Naive thymus-derived CD4-positive, alpha-beta T cell (primary cell): ENCODE measurements at regions of chr1 and their contacts with region 1.

Region 1: GRCh38 chr1:6489799-6490180 is 1.7 kb downstream of the PLEKHG5 start:
- DNase-seq: peak; percentile 66 to 87 (median 77)
- ATAC-seq: peak; percentile 77
- H3K4me3 ChIP-seq: peak overlapping the region; percentile 80
- H3K4me3 Mint-ChIP-seq: peak overlapping the region; percentile 63 to 87 (median 81)
- H3K27ac ChIP-seq: peak overlapping the region; percentile 71
- H3K27ac Mint-ChIP-seq: peak overlapping the region in 1 of 9 donors; percentile 79
- H3K4me1 ChIP-seq: peaks cover 13 to 18% of the 10 kb centered on the region in 2 donors
- H3K4me1 Mint-ChIP-seq: peaks cover 20 to 37% (median 31%) of the 10 kb centered on the region in 7 donors
- H3K27me3 ChIP-seq: peaks cover 0 to 6% of the 10 kb centered on the region in 2 donors
- H3K27me3 Mint-ChIP-seq: peaks cover 6 to 24% (median 9%) of the 10 kb centered on the region in 5 donors

Region 2: GRCh38 chr1:6157528-6158174 is 332.1 kb before region 1 on chr1:
- CTCF ChIA-PET with region 1: no interaction called
- POLR2A ChIA-PET with region 1: no interaction called
- intact Hi-C with region 1: no loop called
- DNase-seq: peak in 1 of 9 donors; percentile 35
- ATAC-seq: no peak
- H3K4me3 ChIP-seq: no peak overlapping the region
- H3K4me3 Mint-ChIP-seq: no peak overlapping the region
- H3K27ac ChIP-seq: no peak overlapping the region
- H3K27ac Mint-ChIP-seq: peak overlapping the region in 1 of 9 donors; percentile 41
- H3K4me1 ChIP-seq: peaks cover 0 to 5% of the 10 kb centered on the region in 2 donors
- H3K4me1 Mint-ChIP-seq: peaks cover 0 to 24% (median 6%) of the 10 kb centered on the region in 7 donors
- H3K27me3 ChIP-seq: no peaks in the 10 kb centered on the region
- H3K27me3 Mint-ChIP-seq: peaks cover 0 to 21% (median 13%) of the 10 kb centered on the region in 5 donors

Region 3: GRCh38 chr1:6244401-6245049 is 245.3 kb before region 1 on chr1:
- CTCF ChIA-PET with region 1: no interaction called
- POLR2A ChIA-PET with region 1: no interaction called
- intact Hi-C with region 1: no loop called
- DNase-seq: no peak
- ATAC-seq: no peak
- H3K4me3 ChIP-seq: no peak overlapping the region
- H3K4me3 Mint-ChIP-seq: peak overlapping the region in 3 of 10 donors; percentile 29 to 43 (median 39)
- H3K27ac ChIP-seq: no peak overlapping the region
- H3K27ac Mint-ChIP-seq: peak overlapping the region in 1 of 9 donors; percentile 42
- H3K4me1 ChIP-seq: peaks cover 3 to 13% of the 10 kb centered on the region in 2 donors
- H3K4me1 Mint-ChIP-seq: peaks cover 5 to 19% (median 12%) of the 10 kb centered on the region in 7 donors
- H3K27me3 ChIP-seq: peaks cover 20 to 45% of the 10 kb centered on the region in 2 donors
- H3K27me3 Mint-ChIP-seq: peaks cover 42 to 75% (median 45%) of the 10 kb centered on the region in 5 donors

Region 4: DNA sequence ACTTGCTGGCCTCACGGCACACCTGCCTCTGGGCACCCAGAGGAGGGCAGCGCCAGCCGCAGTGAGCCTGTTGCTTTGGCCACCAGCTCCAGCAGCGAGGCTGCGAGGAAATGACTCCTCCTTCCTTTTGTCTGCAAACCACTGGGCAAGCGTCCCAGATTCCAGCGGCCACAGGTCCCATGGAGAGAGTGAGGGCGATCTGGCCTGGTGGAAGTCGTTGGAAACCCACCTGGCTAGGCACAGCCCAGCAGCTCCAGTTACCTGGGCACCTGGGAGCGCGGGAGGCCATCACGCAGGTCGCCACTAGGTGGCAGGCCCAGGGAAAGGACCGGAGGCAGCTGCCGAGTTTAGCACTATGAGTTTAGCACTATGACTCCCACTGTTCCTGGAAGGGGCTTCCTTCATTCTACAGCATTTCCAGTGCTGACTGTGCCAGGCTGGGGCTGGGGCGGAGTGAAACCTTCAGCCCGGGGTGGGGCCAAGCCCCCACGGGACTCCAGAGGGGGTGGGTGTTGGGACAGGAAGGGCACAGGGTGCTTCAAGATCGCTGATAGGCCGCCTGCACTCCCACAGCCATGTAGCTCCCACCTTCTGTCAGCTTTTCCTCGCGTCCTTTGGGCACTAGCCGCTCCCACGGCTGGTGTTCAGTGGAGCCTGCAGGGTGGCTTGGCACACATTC is 66.3 kb before region 1 on chr1:
- CTCF ChIA-PET with region 1: interaction called, 7 read pairs
- POLR2A ChIA-PET with region 1: no interaction called
- intact Hi-C with region 1: loop called (anchors 1 to 2 kb)
- DNase-seq: peak; percentile 45 to 75 (median 66)
- ATAC-seq: peak; percentile 84
- H3K4me3 ChIP-seq: peak overlapping the region; percentile 15
- H3K4me3 Mint-ChIP-seq: peak overlapping the region; percentile 54 to 83 (median 72)
- H3K27ac ChIP-seq: no peak overlapping the region
- H3K27ac Mint-ChIP-seq: no peak overlapping the region
- H3K4me1 ChIP-seq: peaks cover 13 to 31% of the 10 kb centered on the region in 2 donors
- H3K4me1 Mint-ChIP-seq: peaks cover 0 to 14% (median 11%) of the 10 kb centered on the region in 7 donors
- H3K27me3 ChIP-seq: peaks cover 0 to 8% of the 10 kb centered on the region in 2 donors
- H3K27me3 Mint-ChIP-seq: peaks cover 18 to 60% (median 26%) of the 10 kb centered on the region in 5 donors

Region 5: DNA sequence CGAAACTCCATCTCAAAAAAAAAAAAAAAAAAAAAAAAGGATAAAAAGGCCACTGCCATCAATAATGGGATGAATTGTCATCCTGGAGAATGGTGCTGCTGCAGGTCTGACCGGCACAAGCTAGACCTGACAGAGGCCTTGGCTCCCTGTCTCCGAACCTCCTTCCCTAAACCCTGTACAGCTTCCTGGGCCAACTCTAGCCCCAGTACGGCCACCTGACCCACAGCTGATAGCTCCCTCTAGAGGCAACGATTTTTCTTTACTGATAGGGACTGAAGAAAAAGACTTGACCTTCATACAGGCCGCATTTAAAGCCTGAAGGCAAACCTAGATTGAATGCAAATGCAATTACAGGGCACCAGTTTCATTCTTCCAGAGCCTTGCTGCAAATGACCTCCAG is 33.8 kb after region 1 on chr1:
- CTCF ChIA-PET with region 1: no interaction called
- POLR2A ChIA-PET with region 1: interaction called, 5 read pairs
- intact Hi-C with region 1: loop called in 1 of 2 experiments (anchors 1 kb)
- DNase-seq: no peak
- ATAC-seq: no peak
- H3K4me3 ChIP-seq: no peak overlapping the region
- H3K4me3 Mint-ChIP-seq: no peak overlapping the region
- H3K27ac ChIP-seq: no peak overlapping the region
- H3K27ac Mint-ChIP-seq: peak overlapping the region in 6 of 9 donors; percentile 14 to 84 (median 48)
- H3K4me1 ChIP-seq: no peaks in the 10 kb centered on the region
- H3K4me1 Mint-ChIP-seq: peaks cover 0 to 11% (median 5%) of the 10 kb centered on the region in 7 donors
- H3K27me3 ChIP-seq: no peaks in the 10 kb centered on the region
- H3K27me3 Mint-ChIP-seq: no peaks in the 10 kb centered on the region

Region 6: DNA sequence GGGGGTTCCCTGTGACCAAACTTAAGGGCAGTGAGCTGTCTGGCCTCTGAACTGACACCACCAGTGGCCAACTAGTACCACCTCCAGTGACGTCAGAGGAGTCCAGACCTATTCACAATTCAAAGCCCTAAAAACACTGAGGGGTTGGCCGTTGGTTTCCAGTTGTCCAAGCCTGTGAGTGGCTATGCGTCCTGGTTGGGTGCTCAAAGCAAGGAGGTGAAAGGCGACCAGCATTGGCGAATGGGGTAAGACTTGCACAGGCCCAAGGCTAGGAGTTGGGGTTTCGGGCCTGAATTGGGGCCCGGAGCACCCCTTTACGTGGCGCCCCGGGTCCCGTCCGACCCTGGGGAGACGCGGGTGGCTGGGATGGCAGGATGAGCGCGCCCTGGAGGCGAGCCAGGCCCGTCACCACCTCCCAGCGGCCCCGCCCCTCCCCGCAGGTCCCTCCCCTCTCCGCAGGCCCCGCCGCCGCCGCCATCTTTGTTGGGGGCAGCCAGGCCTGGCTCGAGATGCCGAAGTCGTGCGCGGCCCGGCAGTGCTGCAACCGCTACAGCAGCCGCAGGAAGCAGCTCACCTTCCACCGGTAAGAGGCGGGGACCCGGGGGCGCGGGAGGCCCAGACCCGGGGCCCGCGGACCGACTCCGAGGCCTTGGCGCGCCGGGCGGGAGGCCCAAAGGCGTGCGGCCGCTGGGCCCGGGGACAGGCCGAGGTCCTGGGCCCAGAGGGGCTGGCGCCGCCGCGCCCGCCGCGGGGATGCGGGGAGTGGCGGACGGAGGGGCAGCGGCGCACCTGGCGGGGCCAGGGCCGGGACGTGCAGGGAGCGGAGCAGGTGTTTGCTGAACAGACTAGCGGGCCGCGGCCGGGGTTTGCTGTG is 135.2 kb after region 1 on chr1 and contains the start of gene THAP3:
- CTCF ChIA-PET with region 1: interaction called, 3 read pairs
- POLR2A ChIA-PET with region 1: no interaction called
- intact Hi-C with region 1: loop called in 1 of 2 experiments (anchors 5 kb)
- DNase-seq: peak; percentile 77 to 90 (median 87)
- ATAC-seq: peak; percentile 99
- H3K4me3 ChIP-seq: peak within 1 kb of the TSS; percentile 52
- H3K4me3 Mint-ChIP-seq: peak within 1 kb of the TSS; percentile 86 to 97 (median 92)
- H3K27ac ChIP-seq: peak within 1 kb of the TSS; percentile 78
- H3K27ac Mint-ChIP-seq: peak within 1 kb of the TSS; percentile 72 to 96 (median 86)
- H3K4me1 ChIP-seq: peaks cover 13 to 18% of the 10 kb centered on the region in 2 donors
- H3K4me1 Mint-ChIP-seq: peaks cover 11 to 39% (median 30%) of the 10 kb centered on the region in 7 donors
- H3K27me3 ChIP-seq: no peaks in the 10 kb centered on the region
- H3K27me3 Mint-ChIP-seq: no peaks in the 10 kb centered on the region
- total RNA-seq, gene THAP3: 14.1 to 30.5 (median 20.3) TPM

Region 7: DNA sequence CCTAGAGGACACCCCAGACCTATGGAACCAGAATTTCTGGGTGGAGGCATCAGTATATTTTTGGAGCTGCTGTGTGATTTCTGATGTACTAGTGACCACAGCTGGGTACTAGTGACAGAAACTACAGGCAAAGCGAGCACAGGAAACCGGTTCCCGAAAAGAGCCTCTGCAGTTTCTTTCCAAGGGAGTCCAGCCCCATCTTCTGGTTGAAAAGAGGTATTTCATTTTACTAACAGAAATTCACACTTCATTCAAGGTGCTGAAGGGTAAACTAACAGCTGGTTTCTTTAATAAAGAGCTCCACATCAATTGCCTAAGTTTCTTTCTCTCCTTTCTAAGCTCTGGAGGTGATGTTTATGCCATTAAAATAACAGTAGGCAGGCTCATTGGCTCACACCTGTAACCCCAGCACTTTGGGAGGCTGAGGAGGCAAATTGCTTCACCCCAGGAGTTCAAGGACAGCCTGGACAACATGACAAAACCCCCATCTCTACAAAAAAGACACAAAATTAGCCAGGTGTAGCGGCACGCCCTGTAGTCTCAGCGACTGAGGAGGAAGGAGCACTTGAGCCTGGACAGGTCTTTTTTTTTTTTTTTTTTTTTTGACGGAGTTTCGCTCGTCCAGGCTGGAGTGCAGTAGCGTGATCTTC is 156.8 kb after region 1 on chr1:
- CTCF ChIA-PET with region 1: interaction called, 18 read pairs
- POLR2A ChIA-PET with region 1: no interaction called
- intact Hi-C with region 1: loop called (anchors 1 kb)
- DNase-seq: peak in 7 of 9 donors; percentile 33 to 64 (median 54)
- ATAC-seq: peak; percentile 70
- H3K4me3 ChIP-seq: no peak overlapping the region
- H3K4me3 Mint-ChIP-seq: no peak overlapping the region
- H3K27ac ChIP-seq: no peak overlapping the region
- H3K27ac Mint-ChIP-seq: no peak overlapping the region
- H3K4me1 ChIP-seq: no peaks in the 10 kb centered on the region
- H3K4me1 Mint-ChIP-seq: peaks cover 0 to 6% (median 0%) of the 10 kb centered on the region in 7 donors
- H3K27me3 ChIP-seq: no peaks in the 10 kb centered on the region
- H3K27me3 Mint-ChIP-seq: no peaks in the 10 kb centered on the region

Region 8: DNA sequence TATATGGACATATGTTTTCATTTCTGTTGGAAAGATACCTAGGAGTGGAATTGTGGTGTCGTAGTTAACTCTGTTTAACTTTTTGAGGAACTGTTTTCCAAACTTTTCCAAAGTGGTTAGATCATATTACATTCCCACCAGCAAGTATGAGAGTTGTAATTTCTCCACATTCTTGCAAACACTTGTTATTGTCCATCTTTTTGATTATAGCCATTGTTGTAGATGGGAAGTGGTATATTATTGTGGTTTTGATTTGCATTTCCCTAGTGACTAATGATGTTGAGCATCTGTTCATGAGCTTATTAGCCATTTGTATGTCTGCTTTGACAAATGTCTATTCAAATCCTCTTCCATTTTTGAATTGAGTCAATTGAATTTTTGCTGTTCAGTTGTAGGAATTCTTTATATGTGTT is 315.2 kb after region 1 on chr1:
- CTCF ChIA-PET with region 1: no interaction called
- POLR2A ChIA-PET with region 1: no interaction called
- intact Hi-C with region 1: no loop called
- DNase-seq: no peak
- ATAC-seq: no peak
- H3K4me3 ChIP-seq: no peak overlapping the region
- H3K4me3 Mint-ChIP-seq: peak overlapping the region in 3 of 10 donors; percentile 4 to 72 (median 55)
- H3K27ac ChIP-seq: no peak overlapping the region
- H3K27ac Mint-ChIP-seq: no peak overlapping the region
- H3K4me1 ChIP-seq: peaks cover 8 to 19% of the 10 kb centered on the region in 2 donors
- H3K4me1 Mint-ChIP-seq: peaks cover 18 to 35% (median 31%) of the 10 kb centered on the region in 7 donors
- H3K27me3 ChIP-seq: no peaks in the 10 kb centered on the region
- H3K27me3 Mint-ChIP-seq: no peaks in the 10 kb centered on the region

Region 9: DNA sequence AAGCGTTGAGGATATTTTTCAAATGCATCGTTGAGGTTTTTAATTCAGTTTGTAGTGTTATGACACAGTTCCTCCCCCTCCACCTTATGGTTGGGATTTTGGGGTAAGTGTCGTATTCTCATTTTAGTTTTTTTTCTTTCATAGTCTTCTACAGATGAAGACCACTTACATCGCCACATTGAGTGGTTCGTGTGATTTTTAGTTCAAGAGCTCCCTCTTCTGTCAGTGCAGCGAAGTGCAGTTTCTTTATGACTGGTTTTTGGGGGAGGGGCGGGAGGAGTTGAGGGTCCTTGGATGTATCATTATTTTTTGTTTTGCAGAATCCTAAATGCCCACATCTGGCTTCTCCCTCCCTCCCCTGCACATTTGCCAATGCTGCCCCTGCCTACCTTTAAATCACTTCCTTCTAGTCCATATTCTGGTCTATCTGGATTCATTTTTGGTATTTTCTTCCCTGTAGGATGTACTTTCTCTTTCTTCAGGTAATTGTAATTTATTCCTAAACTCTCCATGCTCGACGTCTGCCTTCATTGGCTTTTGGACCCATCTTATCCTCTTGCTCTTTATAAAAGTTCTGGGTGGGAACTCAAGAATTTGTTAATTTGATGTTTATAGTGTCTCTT is 728.5 kb after region 1 on chr1:
- CTCF ChIA-PET with region 1: no interaction called
- POLR2A ChIA-PET with region 1: no interaction called
- intact Hi-C with region 1: loop called in 1 of 2 experiments (anchors 5 kb)
- DNase-seq: peak in 4 of 9 donors; percentile 9 to 23 (median 10)
- ATAC-seq: no peak
- H3K4me3 ChIP-seq: no peak overlapping the region
- H3K4me3 Mint-ChIP-seq: no peak overlapping the region
- H3K27ac ChIP-seq: no peak overlapping the region
- H3K27ac Mint-ChIP-seq: no peak overlapping the region
- H3K4me1 ChIP-seq: no peaks in the 10 kb centered on the region
- H3K4me1 Mint-ChIP-seq: peaks cover 0 to 7% (median 0%) of the 10 kb centered on the region in 7 donors
- H3K27me3 ChIP-seq: no peaks in the 10 kb centered on the region
- H3K27me3 Mint-ChIP-seq: peaks cover 4 to 48% (median 37%) of the 10 kb centered on the region in 5 donors

Region 10: DNA sequence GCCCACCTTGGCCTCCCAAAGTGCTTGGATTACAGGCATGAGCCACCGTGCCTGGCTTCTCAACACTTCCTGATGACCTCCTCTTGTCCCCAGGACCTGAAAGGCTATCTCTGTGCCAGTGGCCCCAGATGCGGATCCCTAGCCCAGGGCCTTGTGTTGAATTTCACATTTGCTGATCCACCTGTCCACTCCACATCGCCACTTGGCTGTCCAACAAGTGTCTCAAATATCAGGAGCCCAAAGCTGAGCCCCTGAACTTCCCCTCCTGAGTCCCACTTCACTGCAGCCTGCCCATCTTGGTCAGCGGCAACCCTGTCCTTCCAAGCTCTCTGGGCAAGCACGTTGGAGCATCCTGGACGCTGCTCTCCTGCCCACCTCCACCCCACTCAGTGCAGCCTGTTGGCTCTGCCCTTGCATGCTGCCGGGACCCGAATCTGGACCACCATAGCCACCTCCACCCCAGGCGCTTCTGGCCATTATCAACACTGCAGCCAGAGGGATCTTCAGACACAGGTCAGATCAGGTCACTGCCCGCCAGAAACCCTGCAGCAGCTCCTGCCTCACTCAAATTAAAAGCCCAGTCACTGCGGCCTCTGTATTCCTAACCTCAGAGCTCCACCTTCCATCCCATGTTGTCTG is 928.8 kb after region 1 on chr1:
- CTCF ChIA-PET with region 1: no interaction called
- POLR2A ChIA-PET with region 1: no interaction called
- intact Hi-C with region 1: no loop called
- DNase-seq: peak in 1 of 9 donors; percentile 6
- ATAC-seq: no peak
- H3K4me3 ChIP-seq: no peak overlapping the region
- H3K4me3 Mint-ChIP-seq: no peak overlapping the region
- H3K27ac ChIP-seq: no peak overlapping the region
- H3K27ac Mint-ChIP-seq: no peak overlapping the region
- H3K4me1 ChIP-seq: no peaks in the 10 kb centered on the region
- H3K4me1 Mint-ChIP-seq: peaks cover 0 to 3% (median 0%) of the 10 kb centered on the region in 7 donors
- H3K27me3 ChIP-seq: no peaks in the 10 kb centered on the region
- H3K27me3 Mint-ChIP-seq: peaks cover 0 to 31% (median 10%) of the 10 kb centered on the region in 5 donors